SK-N-SH (cell line): ENCODE measurements at regions of chr3 and their contacts with region 1.

Region 1: DNA sequence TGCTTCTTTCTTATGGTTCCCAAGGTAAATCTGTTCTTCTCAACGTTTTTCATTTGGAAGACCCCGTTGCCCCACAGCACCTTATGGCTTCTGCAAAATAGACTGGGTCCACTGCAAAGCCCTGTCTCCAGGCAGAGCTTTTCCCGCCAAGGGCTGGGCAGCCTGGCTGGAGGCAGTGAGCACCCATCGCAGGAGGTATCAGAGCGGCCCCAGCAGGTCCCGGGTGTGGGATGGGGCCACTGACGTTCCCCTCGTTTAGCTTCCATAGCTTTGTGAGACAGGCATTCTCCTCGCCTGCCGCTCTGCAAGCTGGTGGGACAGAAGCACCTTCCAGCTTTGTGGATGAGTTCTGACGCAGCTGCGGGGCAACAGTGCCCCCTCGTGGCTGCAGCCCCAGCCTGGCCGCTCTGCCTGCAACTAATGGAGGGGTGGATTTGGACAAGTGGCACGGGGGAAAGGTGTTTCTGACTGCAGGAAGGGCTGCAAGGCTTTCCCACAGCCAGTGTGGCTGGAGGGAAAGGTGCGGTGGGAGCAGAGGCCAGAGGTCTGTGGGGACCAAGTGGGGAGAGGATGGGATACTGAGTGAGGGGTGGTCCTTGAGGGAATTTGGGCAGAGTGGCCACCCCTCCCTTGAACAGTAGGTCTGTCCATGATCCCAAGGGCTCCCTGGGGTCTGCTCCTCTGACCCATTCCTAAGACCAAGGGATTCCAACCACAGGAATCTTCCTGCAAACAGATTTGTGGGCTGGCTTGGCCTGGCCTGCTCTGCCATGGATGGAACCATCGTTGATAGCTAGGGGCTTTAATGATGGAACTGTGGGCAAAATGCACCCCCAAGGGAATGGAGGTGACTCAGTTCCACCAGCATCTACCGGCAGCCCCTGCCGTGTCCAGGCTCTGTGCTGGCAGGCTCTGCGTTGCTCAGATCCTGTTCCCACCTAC is 99.4 kb downstream of the FBLN2 start:
- DNase-seq: peak; percentile 94
- H3K4me3 ChIP-seq: peak overlapping the region in 1 of 2 experiments; percentile 42; a peak in 1 of 4 replicates
- H3K27ac ChIP-seq: no peak overlapping the region
- H3K4me1 ChIP-seq: peaks cover 0 to 10% of the 10 kb centered on the region in 2 experiments; a peak in 1 of 4 replicates
- H3K27me3 ChIP-seq: no peaks in the 10 kb centered on the region; the same call in 1 of the 2 replicates
- CTCF ChIP-seq: peak; percentile 98
- EP300 ChIP-seq: no peak
- RAD21 ChIP-seq: peak; percentile 99

Region 2: DNA sequence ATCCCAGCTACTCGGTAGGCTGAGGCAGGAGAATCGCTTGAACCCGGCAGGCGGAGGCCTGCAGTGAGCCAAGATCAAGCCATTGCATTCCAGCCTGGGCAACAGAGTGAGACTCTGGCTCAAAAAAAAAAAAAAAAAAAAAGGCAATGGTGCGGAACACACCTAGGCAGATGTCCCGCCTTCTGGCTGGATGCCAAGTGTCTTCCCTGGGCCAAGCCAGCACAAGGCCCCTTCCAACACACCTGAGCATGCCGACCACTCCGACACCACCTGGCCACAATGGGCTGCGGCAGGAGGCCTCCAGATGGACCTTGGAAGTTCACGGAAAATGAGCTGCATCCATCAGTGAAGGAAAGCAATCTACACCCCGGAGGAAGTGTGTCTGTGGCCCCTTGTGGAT is 247.2 kb before region 1 on chr3:
- CTCF ChIA-PET with region 1: no interaction called
- POLR2A ChIA-PET with region 1: no interaction called
- DNase-seq: no peak
- H3K4me3 ChIP-seq: no peak overlapping the region
- H3K27ac ChIP-seq: no peak overlapping the region
- H3K4me1 ChIP-seq: peaks cover 0 to 5% of the 10 kb centered on the region in 2 experiments; a peak in 1 of 4 replicates
- H3K27me3 ChIP-seq: no peaks in the 10 kb centered on the region
- CTCF ChIP-seq: no peak
- EP300 ChIP-seq: no peak
- RAD21 ChIP-seq: no peak

Region 3: GRCh38 chr3:13419505-13420044 is 228.8 kb before region 1 on chr3:
- CTCF ChIA-PET with region 1: interaction called, 10 read pairs
- POLR2A ChIA-PET with region 1: no interaction called
- DNase-seq: peak; percentile 86
- H3K4me3 ChIP-seq: peak overlapping the region in 1 of 2 experiments; percentile 58; a peak in 2 of 4 replicates
- H3K27ac ChIP-seq: peak overlapping the region in 1 of 2 experiments; percentile 63; a peak in 2 of 4 replicates
- H3K4me1 ChIP-seq: peaks cover 3 to 26% of the 10 kb centered on the region in 2 experiments; a peak in 2 of 4 replicates
- H3K27me3 ChIP-seq: 0 out of 2 replicates have a peak, but pooled peaks cover 8% of the 10 kb centered on the region
- CTCF ChIP-seq: no peak
- EP300 ChIP-seq: no peak
- RAD21 ChIP-seq: no peak

Region 4: DNA sequence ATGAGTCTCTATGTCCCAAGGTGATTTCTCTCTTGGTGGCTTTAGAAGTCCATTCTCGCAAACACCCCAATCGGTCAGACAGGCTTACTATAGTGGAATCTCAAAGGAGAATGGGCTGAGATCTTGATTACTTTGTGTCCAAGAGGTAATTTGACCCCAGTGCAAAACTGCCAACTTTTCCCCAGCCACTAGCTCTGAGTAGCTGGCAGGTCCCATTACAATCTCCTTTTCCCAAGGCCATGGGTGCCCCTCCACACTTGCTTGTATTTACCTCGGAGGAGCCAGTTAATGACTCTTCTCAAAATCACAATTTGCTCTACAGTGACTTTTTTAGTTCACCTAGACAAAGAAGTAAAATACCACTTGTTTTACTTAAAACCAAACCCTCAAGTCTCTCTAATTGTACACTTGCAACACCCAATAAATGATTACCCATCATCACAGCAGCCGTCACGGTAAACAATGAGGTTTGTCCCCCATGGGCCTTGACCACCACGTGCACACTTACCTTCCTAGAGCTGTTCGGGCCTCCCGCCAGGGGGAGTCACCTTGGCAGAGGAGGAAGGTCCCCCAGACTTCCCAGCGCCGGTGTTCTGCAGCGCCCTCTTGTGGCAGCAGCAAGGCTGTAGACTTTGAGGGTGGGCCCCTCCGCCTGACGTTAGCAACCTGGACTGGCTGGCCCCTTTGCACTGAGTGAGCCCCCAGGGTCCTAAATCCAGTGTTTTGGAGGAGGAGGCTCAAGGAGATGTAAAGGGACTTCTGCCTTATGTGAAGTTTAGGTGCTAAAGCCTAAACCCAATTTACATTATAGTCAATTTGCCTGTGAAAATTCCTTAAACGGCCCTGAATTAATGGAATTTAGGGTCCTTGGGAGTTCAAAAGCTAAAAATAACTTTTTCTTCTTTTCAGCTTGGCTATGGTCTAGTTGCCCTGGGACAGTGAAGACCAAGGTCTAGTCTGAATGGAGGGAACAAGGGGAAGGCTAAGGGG is 186.9 kb before region 1 on chr3:
- CTCF ChIA-PET with region 1: interaction called, 10 read pairs
- POLR2A ChIA-PET with region 1: no interaction called
- DNase-seq: peak; percentile 72
- H3K4me3 ChIP-seq: peak overlapping the region in 1 of 2 experiments; percentile 46; a peak in 1 of 4 replicates
- H3K27ac ChIP-seq: no peak overlapping the region
- H3K4me1 ChIP-seq: no peaks in the 10 kb centered on the region
- H3K27me3 ChIP-seq: peaks cover 16% of the 10 kb centered on the region; the same call in 1 of the 2 replicates
- CTCF ChIP-seq: peak; percentile 61
- EP300 ChIP-seq: no peak
- RAD21 ChIP-seq: peak; percentile 43

Region 5: GRCh38 chr3:13479581-13480339 is 168.6 kb before region 1 on chr3 and contains the start of gene HDAC11:
- CTCF ChIA-PET with region 1: interaction called, 109 read pairs
- POLR2A ChIA-PET with region 1: no interaction called
- DNase-seq: peak; percentile 100
- H3K4me3 ChIP-seq: peak within 1 kb of the TSS; percentile 68 to 87
- H3K27ac ChIP-seq: peak within 1 kb of the TSS; percentile 58 to 66; a peak in 2 of 4 replicates
- H3K4me1 ChIP-seq: peaks cover 9 to 28% of the 10 kb centered on the region in 2 experiments; a peak in 1 of 4 replicates
- H3K27me3 ChIP-seq: no peaks in the 10 kb centered on the region
- CTCF ChIP-seq: no peak
- EP300 ChIP-seq: no peak
- RAD21 ChIP-seq: no peak
- polyA plus RNA-seq, gene HDAC11: 13.9 and 17.5 TPM in 2 replicates

Region 6: GRCh38 chr3:13536832-13537231 is 111.5 kb before region 1 on chr3:
- CTCF ChIA-PET with region 1: interaction called, 12 read pairs
- POLR2A ChIA-PET with region 1: no interaction called
- DNase-seq: no peak
- H3K4me3 ChIP-seq: no peak overlapping the region
- H3K27ac ChIP-seq: no peak overlapping the region; a peak in 1 of 4 replicates
- H3K4me1 ChIP-seq: peaks cover 0 to 13% of the 10 kb centered on the region in 2 experiments; a peak in 1 of 4 replicates
- H3K27me3 ChIP-seq: no peaks in the 10 kb centered on the region
- CTCF ChIP-seq: no peak
- EP300 ChIP-seq: no peak
- RAD21 ChIP-seq: no peak

Region 7: GRCh38 chr3:13564751-13565560 is 83.4 kb before region 1 on chr3:
- CTCF ChIA-PET with region 1: interaction called, 138 read pairs
- POLR2A ChIA-PET with region 1: interaction called, 4 read pairs
- DNase-seq: no peak
- H3K4me3 ChIP-seq: no peak overlapping the region
- H3K27ac ChIP-seq: peak overlapping the region in 1 of 2 experiments; percentile 95; a peak in 2 of 4 replicates
- H3K4me1 ChIP-seq: peaks cover 0 to 71% of the 10 kb centered on the region in 2 experiments; a peak in 2 of 4 replicates
- H3K27me3 ChIP-seq: no peaks in the 10 kb centered on the region
- CTCF ChIP-seq: no peak
- EP300 ChIP-seq: no peak
- RAD21 ChIP-seq: no peak

Region 8: GRCh38 chr3:13623099-13623654 is 25.2 kb before region 1 on chr3:
- CTCF ChIA-PET with region 1: interaction called, 31 read pairs
- POLR2A ChIA-PET with region 1: no interaction called
- DNase-seq: peak; percentile 83
- H3K4me3 ChIP-seq: no peak overlapping the region
- H3K27ac ChIP-seq: peak overlapping the region in 1 of 2 experiments; percentile 60; a peak in 1 of 4 replicates
- H3K4me1 ChIP-seq: peaks cover 0 to 12% of the 10 kb centered on the region in 2 experiments; a peak in 1 of 4 replicates
- H3K27me3 ChIP-seq: no peaks in the 10 kb centered on the region
- CTCF ChIP-seq: no peak
- EP300 ChIP-seq: no peak
- RAD21 ChIP-seq: no peak